Activated CD8-positive, alpha-beta memory T cell treated with anti-CD3 and anti-CD28 coated beads, Interleukin-2, amount 10 ng/mL, durations not matched to agents 7 days and 5 days (primary cell): ENCODE measurements at regions of chr1 and their contacts with region 1.

Region 1: DNA sequence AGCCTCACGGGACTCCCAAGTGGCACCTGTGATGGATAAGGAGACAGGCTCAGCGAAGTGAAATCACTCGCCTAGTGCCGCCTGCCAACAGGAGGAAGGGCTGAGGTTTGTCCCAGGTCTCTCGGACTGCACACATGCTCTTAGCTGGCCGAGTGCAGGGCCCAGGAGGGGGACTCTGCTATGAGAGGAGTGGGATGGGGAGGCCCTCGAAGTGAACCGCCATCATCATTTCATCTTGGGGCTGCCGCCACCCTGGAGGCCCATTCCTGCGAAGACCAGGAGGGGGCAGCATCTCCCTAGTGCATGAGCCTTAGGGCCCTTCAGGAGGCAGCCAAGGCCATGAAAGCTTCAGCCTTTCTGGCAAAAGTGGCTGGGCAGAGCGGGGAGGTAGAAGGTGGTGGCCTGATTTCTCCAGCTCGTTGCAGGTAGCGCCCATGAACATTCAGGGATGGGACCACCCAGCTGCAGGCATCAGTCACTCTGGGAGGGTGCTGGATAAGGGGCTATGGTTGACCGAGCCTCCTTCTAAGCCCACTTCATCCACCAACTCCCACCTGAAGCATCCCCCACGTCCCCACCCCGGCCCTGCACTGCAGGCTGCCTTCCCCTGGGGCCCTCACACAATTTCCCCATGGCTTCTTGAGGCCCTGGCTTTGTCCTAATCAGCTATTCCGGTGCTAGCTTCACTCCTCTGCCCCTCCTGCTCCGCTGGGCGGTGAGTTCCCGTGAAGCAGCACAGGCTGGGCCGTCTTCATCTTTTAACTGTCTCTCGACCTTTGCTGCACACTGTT is 17.2 kb upstream of the RASSF5 start:
- DNase-seq: peak; percentile 79
- ATAC-seq: peak; percentile 81
- H3K4me3 Mint-ChIP-seq: no peak overlapping the region
- H3K27ac Mint-ChIP-seq: no peak overlapping the region
- H3K4me1 Mint-ChIP-seq: peaks cover 19% of the 10 kb centered on the region
- H3K27me3 Mint-ChIP-seq: no peaks in the 10 kb centered on the region

Region 2: GRCh38 chr1:206461602-206462455 is 28.3 kb before region 1 on chr1:
- CTCF ChIA-PET with region 1: interaction called, 11 read pairs
- DNase-seq: peak; percentile 86
- ATAC-seq: peak; percentile 77
- H3K4me3 Mint-ChIP-seq: no peak overlapping the region
- H3K27ac Mint-ChIP-seq: no peak overlapping the region
- H3K4me1 Mint-ChIP-seq: peaks cover 45% of the 10 kb centered on the region
- H3K27me3 Mint-ChIP-seq: no peaks in the 10 kb centered on the region

Region 3: DNA sequence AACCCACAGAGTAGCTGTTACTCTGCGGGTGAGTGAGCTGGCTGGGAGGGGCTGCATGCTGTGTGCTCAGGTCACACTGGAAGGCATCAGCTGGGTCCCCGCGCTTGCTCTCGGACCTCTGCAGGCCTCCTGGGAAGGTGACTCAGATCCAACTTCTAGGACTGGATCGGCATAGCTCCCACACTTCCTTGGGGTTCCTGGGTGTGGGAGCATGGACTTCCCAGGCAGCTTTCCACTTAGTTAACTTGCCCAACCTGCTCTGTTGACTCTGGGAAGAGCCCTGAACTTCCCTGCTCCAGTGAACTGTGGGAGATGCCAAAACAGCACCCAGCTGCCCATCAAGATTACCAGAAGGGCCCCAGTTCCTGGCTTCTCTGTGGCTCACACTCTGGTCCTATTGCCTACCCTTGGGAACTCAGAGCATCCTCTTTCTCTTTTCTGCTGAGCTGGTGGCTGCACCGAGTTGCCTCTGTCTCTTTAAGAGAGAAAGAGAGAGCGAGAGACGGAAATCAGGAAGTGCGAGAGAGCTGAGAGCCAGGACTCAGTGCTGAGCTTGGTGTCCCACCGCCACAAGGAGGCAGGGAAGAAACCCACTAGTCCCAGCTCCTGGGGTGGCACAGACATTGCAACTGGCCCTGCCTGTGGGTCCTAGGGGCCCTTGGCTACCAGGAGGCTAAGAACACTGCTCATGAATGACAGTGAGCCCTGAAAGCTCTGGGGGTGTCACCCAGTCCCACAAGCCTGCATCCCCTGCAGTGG is 20.1 kb before region 1 on chr1 and contains the start of gene IKBKE:
- CTCF ChIA-PET with region 1: interaction called, 20 read pairs
- DNase-seq: peak; percentile 84
- ATAC-seq: peak; percentile 72
- H3K4me3 Mint-ChIP-seq: peak within 1 kb of the TSS; percentile 91
- H3K27ac Mint-ChIP-seq: peak within 1 kb of the TSS; percentile 92
- H3K4me1 Mint-ChIP-seq: peaks cover 88% of the 10 kb centered on the region
- H3K27me3 Mint-ChIP-seq: no peaks in the 10 kb centered on the region
- total RNA-seq, gene IKBKE: 64.8 to 72.7 TPM

Region 4: GRCh38 chr1:206479183-206480125 is 10.7 kb before region 1 on chr1:
- CTCF ChIA-PET with region 1: interaction called, 21 read pairs
- DNase-seq: peak; percentile 80
- ATAC-seq: peak; percentile 72
- H3K4me3 Mint-ChIP-seq: no peak overlapping the region
- H3K27ac Mint-ChIP-seq: peak overlapping the region; percentile 61
- H3K4me1 Mint-ChIP-seq: peaks cover 17% of the 10 kb centered on the region
- H3K27me3 Mint-ChIP-seq: no peaks in the 10 kb centered on the region

Region 5: GRCh38 chr1:206507284-206508129 is 17.3 kb after region 1 on chr1 and contains the start of gene RASSF5:
- CTCF ChIA-PET with region 1: interaction called, 15 read pairs
- DNase-seq: peak; percentile 90
- ATAC-seq: peak; percentile 87
- H3K4me3 Mint-ChIP-seq: peak within 1 kb of the TSS; percentile 67
- H3K27ac Mint-ChIP-seq: no peak within 1 kb of the TSS
- H3K4me1 Mint-ChIP-seq: peaks cover 48% of the 10 kb centered on the region
- H3K27me3 Mint-ChIP-seq: peaks cover 26% of the 10 kb centered on the region
- total RNA-seq, gene RASSF5: 184 to 216 TPM

Region 6: GRCh38 chr1:206583707-206584648 is 93.8 kb after region 1 on chr1:
- CTCF ChIA-PET with region 1: interaction called, 22 read pairs
- DNase-seq: peak; percentile 88
- ATAC-seq: peak; percentile 24
- H3K4me3 Mint-ChIP-seq: peak overlapping the region; percentile 10
- H3K27ac Mint-ChIP-seq: peak overlapping the region; percentile 95
- H3K4me1 Mint-ChIP-seq: peaks cover 93% of the 10 kb centered on the region
- H3K27me3 Mint-ChIP-seq: no peaks in the 10 kb centered on the region

Region 7: GRCh38 chr1:206635080-206635977 is 145.2 kb after region 1 on chr1 and contains the start of gene DYRK3:
- CTCF ChIA-PET with region 1: interaction called, 11 read pairs
- DNase-seq: peak; percentile 96
- ATAC-seq: peak; percentile 93
- H3K4me3 Mint-ChIP-seq: peak within 1 kb of the TSS; percentile 76
- H3K27ac Mint-ChIP-seq: peak within 1 kb of the TSS; percentile 91
- H3K4me1 Mint-ChIP-seq: peaks cover 33% of the 10 kb centered on the region
- H3K27me3 Mint-ChIP-seq: peaks cover 19% of the 10 kb centered on the region
- total RNA-seq, gene DYRK3: 9.5 to 12.7 TPM